WTC11 (cell line): ENCODE measurements at regions of chrX and their contacts with region 1.

Region 1: GRCh38 chrX:11724122-11725017 is 33.7 kb upstream of the MSL3 start:
- DNase-seq: no peak
- ATAC-seq: no peak
- H3K4me3 Mint-ChIP-seq: no peak overlapping the region
- H3K27ac Mint-ChIP-seq: no peak overlapping the region
- H3K4me1 Mint-ChIP-seq: no peaks in the 10 kb centered on the region
- H3K27me3 Mint-ChIP-seq: no peaks in the 10 kb centered on the region; the same call in none of the 2 replicates
- CTCF ChIP-seq: peak; percentile 33; the same call in 1 of the 2 replicates

Region 2: GRCh38 chrX:11665144-11666111 is 58.9 kb before region 1 on chrX and contains the start of gene ARHGAP6:
- CTCF ChIA-PET with region 1: interaction called, 12 read pairs
- POLR2A ChIA-PET with region 1: no interaction called
- DNase-seq: peak; percentile 57
- ATAC-seq: peak; percentile 77
- H3K4me3 Mint-ChIP-seq: peak within 1 kb of the TSS; percentile 75
- H3K27ac Mint-ChIP-seq: no peak within 1 kb of the TSS
- H3K4me1 Mint-ChIP-seq: peaks cover 16% of the 10 kb centered on the region
- H3K27me3 Mint-ChIP-seq: peaks cover 98% of the 10 kb centered on the region
- CTCF ChIP-seq: no peak
- total RNA-seq, gene ARHGAP6: 0.55 to 1.0 TPM (median 0.89 TPM) in 3 replicates

Region 3: GRCh38 chrX:12128017-12128416 is 403.6 kb after region 1 on chrX:
- CTCF ChIA-PET with region 1: no interaction called
- POLR2A ChIA-PET with region 1: no interaction called
- DNase-seq: no peak
- ATAC-seq: no peak
- H3K4me3 Mint-ChIP-seq: no peak overlapping the region
- H3K27ac Mint-ChIP-seq: no peak overlapping the region
- H3K4me1 Mint-ChIP-seq: no peaks in the 10 kb centered on the region
- H3K27me3 Mint-ChIP-seq: no peaks in the 10 kb centered on the region
- CTCF ChIP-seq: no peak